GM12878 (cell line): ENCODE measurements at regions of chr19 and their contacts with region 1.

Region 1: DNA sequence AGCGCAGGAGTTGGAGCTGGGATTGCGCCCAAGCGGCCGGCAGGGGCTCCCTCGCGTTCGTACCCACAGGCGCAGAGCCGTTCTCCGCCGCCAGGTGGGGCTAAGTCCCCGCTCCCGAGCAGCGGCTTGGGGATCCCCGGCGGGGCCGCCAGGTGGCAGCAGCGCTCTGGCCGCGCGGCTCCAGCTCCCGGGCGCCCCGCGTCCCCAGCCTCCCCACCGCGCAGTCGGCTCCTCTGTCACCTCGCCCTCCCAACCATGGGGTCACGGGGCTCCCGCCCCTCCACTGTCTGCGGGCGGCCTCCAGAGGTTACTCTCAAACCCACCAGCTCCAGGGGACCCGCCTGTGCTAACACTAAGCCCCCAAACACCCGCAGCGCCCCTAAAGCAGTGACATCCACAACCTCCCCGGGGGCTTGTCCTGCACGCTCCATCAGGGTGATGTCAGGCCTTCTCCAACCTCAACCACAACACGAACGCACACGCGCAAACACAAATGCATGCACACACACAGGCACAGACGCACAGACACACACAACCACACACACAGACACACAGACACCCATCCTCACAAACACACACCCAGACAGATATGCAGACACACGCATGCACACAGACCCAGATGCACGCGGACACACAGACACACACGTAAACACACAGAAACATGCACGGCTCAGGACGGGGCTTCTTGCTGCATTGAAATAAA is 18.4 kb upstream of the KCTD15 start:
- DNase-seq: peak; percentile 4
- ATAC-seq: peak; percentile 99
- H3K4me3 ChIP-seq: no peak overlapping the region
- H3K27ac ChIP-seq: no peak overlapping the region
- H3K4me1 ChIP-seq: no peaks in the 10 kb centered on the region
- H3K27me3 ChIP-seq: peaks cover 0 to 3% of the 10 kb centered on the region in 2 experiments; a peak in 2 of 4 replicates
- CTCF ChIP-seq: peak; percentile 100; a peak in 5 of 6 replicates
- EP300 ChIP-seq: no peak
- POLR2A ChIP-seq: no peak
- RAD21 ChIP-seq: peak; percentile 84

Region 2: GRCh38 chr19:33678796-33679585 is 99.2 kb before region 1 on chr19:
- CTCF ChIA-PET with region 1: no interaction called
- POLR2A ChIA-PET with region 1: no interaction called
- RAD21 ChIA-PET with region 1: no interaction called
- SMC1A ChIA-PET with region 1: no interaction called
- in situ Hi-C with region 1: no loop called
- intact Hi-C with region 1: no loop called
- DNase-seq: no peak
- ATAC-seq: no peak
- H3K4me3 ChIP-seq: no peak overlapping the region
- H3K27ac ChIP-seq: no peak overlapping the region
- H3K4me1 ChIP-seq: no peaks in the 10 kb centered on the region
- H3K27me3 ChIP-seq: no peaks in the 10 kb centered on the region; a peak in 1 of 4 replicates
- CTCF ChIP-seq: no peak
- EP300 ChIP-seq: no peak
- POLR2A ChIP-seq: no peak
- RAD21 ChIP-seq: no peak

Region 3: DNA sequence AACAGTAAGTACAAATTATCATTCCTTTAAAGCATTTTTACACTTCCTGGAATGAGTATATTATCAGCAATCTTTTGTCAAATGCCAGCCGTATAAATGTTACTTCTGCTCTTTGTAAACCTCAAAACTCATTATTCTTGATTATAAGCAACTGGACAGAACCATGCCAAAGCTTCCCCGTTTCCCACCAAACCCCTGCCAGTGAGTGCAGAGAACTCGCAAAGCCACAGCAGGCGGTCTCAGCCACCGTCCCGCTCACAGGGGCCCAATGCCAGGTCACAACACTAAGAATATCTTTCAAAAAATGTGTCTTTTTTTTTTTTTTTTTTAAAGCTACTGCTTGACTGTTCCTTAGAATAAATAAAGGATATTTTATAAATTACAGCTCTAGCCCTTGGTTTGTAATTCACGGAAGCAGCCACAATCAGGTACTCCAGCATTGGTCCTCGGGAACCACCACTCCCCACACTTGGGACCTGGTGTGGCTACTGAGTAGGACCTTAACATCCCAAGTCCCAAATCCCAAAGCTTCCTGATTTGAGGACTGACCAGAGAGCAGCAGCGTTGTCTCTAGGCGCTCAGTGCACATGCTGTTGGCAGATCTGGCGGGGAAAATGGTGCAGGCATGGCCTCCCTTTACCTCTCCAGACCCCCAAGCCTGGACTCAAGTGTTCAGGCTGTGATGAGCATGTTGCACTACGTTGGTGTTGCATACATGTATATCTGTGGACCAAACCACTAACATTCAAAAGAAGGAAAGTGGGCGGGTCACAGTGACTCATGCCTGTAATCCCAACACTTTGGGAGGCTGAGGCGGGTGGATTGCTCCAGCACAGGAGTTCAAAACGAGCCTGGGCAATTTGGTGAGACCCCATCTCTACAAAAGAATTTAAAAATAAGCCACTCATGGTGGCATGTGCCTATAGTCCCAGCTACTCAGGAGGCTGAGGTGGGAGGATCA is 37.4 kb after region 1 on chr19:
- CTCF ChIA-PET with region 1: no interaction called
- POLR2A ChIA-PET with region 1: no interaction called
- RAD21 ChIA-PET with region 1: no interaction called
- SMC1A ChIA-PET with region 1: no interaction called
- in situ Hi-C with region 1: no loop called
- intact Hi-C with region 1: no loop called
- DNase-seq: no peak
- ATAC-seq: no peak
- H3K4me3 ChIP-seq: no peak overlapping the region
- H3K27ac ChIP-seq: no peak overlapping the region
- H3K4me1 ChIP-seq: peaks cover 3% of the 10 kb centered on the region; the same call in 1 of the 2 replicates
- H3K27me3 ChIP-seq: peaks cover 0 to 5% of the 10 kb centered on the region in 2 experiments; a peak in 1 of 4 replicates
- CTCF ChIP-seq: no peak
- EP300 ChIP-seq: no peak
- POLR2A ChIP-seq: no peak
- RAD21 ChIP-seq: no peak

Region 4: DNA sequence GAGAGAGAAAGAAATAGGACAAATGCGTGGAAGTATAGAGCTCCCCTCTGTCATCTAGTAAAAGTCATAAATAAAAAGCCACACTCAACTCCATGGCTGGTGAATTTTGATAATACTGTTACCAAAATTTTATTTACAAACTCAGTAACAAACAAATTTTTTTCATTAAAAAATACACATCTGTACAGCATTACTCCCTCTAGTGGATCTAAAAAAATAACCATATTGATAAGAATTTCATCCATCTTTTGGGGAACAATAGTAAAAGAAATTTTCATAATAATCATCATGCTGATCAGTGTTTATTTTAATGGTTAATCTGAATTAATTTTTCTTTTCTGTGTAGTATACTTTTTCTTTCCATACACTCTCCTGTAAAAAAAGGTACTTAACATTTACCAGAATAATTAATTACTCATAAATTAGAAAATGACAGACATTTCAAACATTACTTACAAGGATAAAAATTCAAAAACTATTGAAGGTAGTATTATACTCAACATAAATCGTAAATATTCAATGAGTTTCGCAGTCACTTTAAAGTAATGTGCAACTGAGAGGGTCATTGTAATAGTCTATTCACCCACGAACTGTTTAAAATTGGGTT is 220.6 kb after region 1 on chr19:
- CTCF ChIA-PET with region 1: interaction called, 7 read pairs
- POLR2A ChIA-PET with region 1: no interaction called
- RAD21 ChIA-PET with region 1: no interaction called
- SMC1A ChIA-PET with region 1: no interaction called
- in situ Hi-C with region 1: no loop called
- intact Hi-C with region 1: loop called (anchors 5 kb)
- DNase-seq: no peak
- ATAC-seq: no peak
- H3K4me3 ChIP-seq: no peak overlapping the region
- H3K27ac ChIP-seq: no peak overlapping the region
- H3K4me1 ChIP-seq: no peaks in the 10 kb centered on the region
- H3K27me3 ChIP-seq: no peaks in the 10 kb centered on the region; a peak in 1 of 4 replicates
- CTCF ChIP-seq: no peak; a peak in 1 of 6 replicates
- EP300 ChIP-seq: no peak
- POLR2A ChIP-seq: no peak
- RAD21 ChIP-seq: no peak

Region 5: GRCh38 chr19:34096020-34096915 is 318.0 kb after region 1 on chr19:
- CTCF ChIA-PET with region 1: interaction called, 23 read pairs
- POLR2A ChIA-PET with region 1: no interaction called
- RAD21 ChIA-PET with region 1: interaction called, 8 read pairs
- SMC1A ChIA-PET with region 1: interaction called, 3 read pairs
- in situ Hi-C with region 1: loop called (anchors 5 kb)
- intact Hi-C with region 1: loop called (anchors 1 kb)
- DNase-seq: no peak
- ATAC-seq: peak; percentile 56; the same call in 2 of the 3 replicates
- H3K4me3 ChIP-seq: no peak overlapping the region
- H3K27ac ChIP-seq: no peak overlapping the region
- H3K4me1 ChIP-seq: no peaks in the 10 kb centered on the region
- H3K27me3 ChIP-seq: no peaks in the 10 kb centered on the region
- CTCF ChIP-seq: peak; percentile 50 to 58 (median 57)
- EP300 ChIP-seq: no peak
- POLR2A ChIP-seq: no peak
- RAD21 ChIP-seq: peak; percentile 58

Region 6: DNA sequence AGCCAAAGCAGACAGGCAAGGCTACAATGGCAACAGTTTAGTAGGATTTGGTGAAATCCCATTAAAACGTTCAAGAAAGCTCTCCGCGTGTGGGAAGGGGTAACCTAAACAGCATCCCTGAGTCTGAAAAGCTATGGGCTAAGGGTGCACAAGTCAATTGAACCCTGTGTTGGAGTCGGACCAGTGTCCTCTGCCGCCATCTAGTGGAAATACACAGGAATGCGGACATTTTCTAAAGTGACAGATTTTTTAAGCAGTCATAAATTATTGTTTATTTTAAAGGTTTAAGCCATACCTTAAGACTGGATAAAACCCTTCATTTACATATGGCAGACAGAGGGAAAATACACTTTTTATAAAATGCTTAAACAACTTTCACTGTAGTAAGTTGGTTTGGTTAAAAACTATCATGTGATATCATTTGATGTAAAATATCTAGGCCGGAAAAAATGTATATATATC is 367.5 kb after region 1 on chr19:
- CTCF ChIA-PET with region 1: interaction called, 6 read pairs
- POLR2A ChIA-PET with region 1: no interaction called
- RAD21 ChIA-PET with region 1: interaction called, 5 read pairs
- SMC1A ChIA-PET with region 1: interaction called, 4 read pairs
- in situ Hi-C with region 1: no loop called
- intact Hi-C with region 1: loop called (anchors 2 kb)
- DNase-seq: no peak
- ATAC-seq: peak; percentile 82
- H3K4me3 ChIP-seq: no peak overlapping the region
- H3K27ac ChIP-seq: no peak overlapping the region
- H3K4me1 ChIP-seq: no peaks in the 10 kb centered on the region
- H3K27me3 ChIP-seq: no peaks in the 10 kb centered on the region; a peak in 1 of 4 replicates
- CTCF ChIP-seq: peak; percentile 62 to 90 (median 83)
- EP300 ChIP-seq: no peak
- POLR2A ChIP-seq: no peak
- RAD21 ChIP-seq: peak; percentile 85